Mammary epithelial cell (primary cell): ENCODE measurements at regions of chr19 and their contacts with region 1.

Region 1: DNA sequence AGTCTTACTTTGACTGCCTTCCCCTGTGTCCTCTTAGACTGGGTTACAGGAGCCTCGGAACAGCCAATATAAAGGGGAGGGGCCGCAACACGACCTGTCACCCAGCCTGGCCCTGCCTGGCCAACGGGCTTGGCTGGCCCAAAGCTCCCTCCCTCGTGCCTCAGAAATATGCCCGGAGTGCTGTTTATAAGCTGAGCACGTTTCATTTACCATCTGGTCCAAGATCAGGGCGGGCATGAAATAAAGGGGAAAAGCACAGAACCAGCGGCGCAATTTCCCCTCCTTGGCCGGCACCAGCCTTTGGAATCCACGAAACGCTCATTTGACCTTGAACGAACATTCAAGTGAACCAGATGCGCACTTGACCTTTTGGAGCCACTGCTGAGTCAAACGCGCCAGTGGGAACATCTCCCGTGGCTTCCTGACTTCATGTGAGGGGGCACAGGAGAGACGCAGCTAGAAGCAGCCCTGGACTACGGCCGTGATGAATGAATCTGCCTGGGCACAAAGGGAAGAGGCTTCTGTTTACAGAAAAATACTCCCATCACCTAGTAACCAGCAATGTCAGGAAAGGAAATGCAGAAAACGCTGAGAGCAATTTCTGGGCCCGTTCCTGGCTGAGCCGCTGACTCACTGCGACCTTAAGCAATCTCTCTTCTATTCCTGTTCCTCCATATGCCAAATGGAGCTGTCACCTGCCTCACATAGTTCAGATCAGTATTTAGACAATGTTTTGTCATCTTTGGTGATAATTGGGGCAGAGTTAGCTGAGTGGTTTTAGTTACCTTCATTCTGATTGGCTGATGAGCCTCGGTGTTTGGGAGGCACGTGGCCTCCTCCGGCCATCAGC is 53.3 kb downstream of the RFX2 start:
- DNase-seq: peak; percentile 98
- H3K4me3 ChIP-seq: peak overlapping the region; percentile 6 to 36 (median 23)
- H3K27ac ChIP-seq: peak overlapping the region; percentile 99
- H3K4me1 ChIP-seq: peaks cover 57% of the 10 kb centered on the region
- H3K27me3 ChIP-seq: no peaks in the 10 kb centered on the region
- CTCF ChIP-seq: peak in 1 of 2 donors; percentile 1

Region 2: GRCh38 chr19:6076675-6077463 is 19.8 kb after region 1 on chr19:
- CTCF ChIA-PET with region 1: interaction called, 3 read pairs
- dilution Hi-C with region 1: no loop called
- in situ Hi-C with region 1: no loop called
- intact Hi-C with region 1: loop called (anchors 1 kb)
- DNase-seq: peak; percentile 76
- H3K4me3 ChIP-seq: no peak overlapping the region
- H3K27ac ChIP-seq: peak overlapping the region; percentile 94
- H3K4me1 ChIP-seq: peaks cover 14% of the 10 kb centered on the region
- H3K27me3 ChIP-seq: no peaks in the 10 kb centered on the region
- CTCF ChIP-seq: no peak

Region 3: DNA sequence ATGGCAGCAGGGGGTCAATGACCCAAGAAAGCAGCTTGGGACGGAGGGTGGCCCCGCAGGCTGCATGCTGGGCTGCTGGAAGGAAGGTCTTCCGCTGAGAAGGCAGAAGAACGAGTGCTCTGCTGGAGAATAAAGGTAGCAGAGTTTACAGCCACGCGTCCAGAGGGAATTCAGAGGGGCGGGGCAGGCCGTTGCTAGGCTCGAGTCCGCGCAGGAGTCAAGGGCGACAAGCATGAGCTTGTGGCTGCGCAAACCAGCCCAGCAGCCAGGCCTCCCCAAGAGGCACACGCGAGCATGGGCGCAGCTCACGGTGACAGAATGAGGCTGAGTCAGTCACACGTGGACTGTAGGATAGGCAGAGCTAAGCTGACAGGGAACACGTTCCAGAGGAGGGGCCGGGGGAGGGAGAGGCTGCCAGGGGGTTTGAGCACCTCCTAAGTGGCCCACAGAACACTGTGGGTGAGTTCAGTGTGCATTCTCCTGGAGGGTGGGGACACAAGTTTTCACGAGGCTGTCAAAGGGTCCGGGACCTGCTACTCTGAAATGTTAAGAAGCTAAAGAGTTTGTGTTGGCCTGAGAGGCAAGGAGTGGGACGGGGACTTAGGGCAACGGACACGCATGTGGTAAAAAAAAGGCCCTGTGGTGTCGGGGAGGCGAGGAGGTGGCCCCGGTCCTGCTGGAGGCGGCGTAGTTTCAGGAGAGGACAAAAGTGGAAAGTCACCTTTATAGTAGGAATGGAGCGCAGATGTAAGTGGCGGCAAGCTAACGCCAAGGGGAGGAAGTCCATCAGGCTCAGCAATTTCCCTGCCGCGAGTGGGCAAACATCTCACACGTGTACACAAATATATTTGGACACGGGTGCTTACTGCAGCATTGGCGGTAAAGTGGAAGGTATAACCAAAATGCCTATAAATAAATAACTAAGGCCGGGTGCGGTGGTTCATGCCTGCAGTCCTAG is 35.6 kb after region 1 on chr19:
- CTCF ChIA-PET with region 1: no interaction called
- dilution Hi-C with region 1: no loop called
- in situ Hi-C with region 1: no loop called
- intact Hi-C with region 1: loop called (anchors 1 kb)
- DNase-seq: peak; percentile 97
- H3K4me3 ChIP-seq: peak overlapping the region; percentile 30 to 50 (median 45)
- H3K27ac ChIP-seq: peak overlapping the region; percentile 99
- H3K4me1 ChIP-seq: peaks cover 42% of the 10 kb centered on the region
- H3K27me3 ChIP-seq: no peaks in the 10 kb centered on the region
- CTCF ChIP-seq: peak in 1 of 2 donors; percentile 32

Region 4: GRCh38 chr19:6103217-6103644 is 46.2 kb after region 1 on chr19:
- CTCF ChIA-PET with region 1: no interaction called
- dilution Hi-C with region 1: no loop called
- in situ Hi-C with region 1: loop called in 1 of 2 experiments (anchors 5 kb)
- intact Hi-C with region 1: loop called (anchors 1 kb)
- DNase-seq: peak; percentile 99
- H3K4me3 ChIP-seq: peak overlapping the region in 1 of 3 experiments; percentile 12
- H3K27ac ChIP-seq: peak overlapping the region; percentile 99
- H3K4me1 ChIP-seq: peaks cover 40% of the 10 kb centered on the region
- H3K27me3 ChIP-seq: no peaks in the 10 kb centered on the region
- CTCF ChIP-seq: no peak

Region 5: DNA sequence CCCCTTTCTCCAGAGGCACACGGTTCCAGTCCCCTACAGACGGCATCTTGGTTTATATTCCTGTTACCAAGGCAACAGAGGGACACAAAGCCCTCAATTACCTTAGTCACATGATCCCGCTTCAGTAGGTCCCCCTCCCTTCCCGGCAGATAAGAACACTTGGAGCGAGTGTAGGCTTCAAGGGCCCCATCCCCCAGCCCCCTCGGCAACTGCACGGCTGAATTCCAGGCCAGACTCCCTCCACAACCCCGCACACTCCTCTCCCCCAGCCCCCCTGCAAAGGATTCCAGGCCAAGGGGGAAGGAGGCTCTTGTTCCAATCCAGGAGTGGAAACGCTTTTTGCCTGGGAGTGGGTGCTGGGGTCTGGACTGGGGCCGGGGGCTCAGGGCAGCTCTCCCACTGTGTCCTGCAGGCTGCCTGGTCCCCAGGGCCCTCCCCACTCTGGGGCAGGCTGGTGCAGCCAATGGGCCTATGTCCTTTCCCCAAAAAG is 160.0 kb after region 1 on chr19:
- CTCF ChIA-PET with region 1: no interaction called
- dilution Hi-C with region 1: no loop called
- in situ Hi-C with region 1: no loop called
- intact Hi-C with region 1: no loop called
- DNase-seq: no peak
- H3K4me3 ChIP-seq: no peak overlapping the region
- H3K27ac ChIP-seq: no peak overlapping the region
- H3K4me1 ChIP-seq: peaks cover 8% of the 10 kb centered on the region
- H3K27me3 ChIP-seq: no peaks in the 10 kb centered on the region
- CTCF ChIP-seq: no peak

Region 6: DNA sequence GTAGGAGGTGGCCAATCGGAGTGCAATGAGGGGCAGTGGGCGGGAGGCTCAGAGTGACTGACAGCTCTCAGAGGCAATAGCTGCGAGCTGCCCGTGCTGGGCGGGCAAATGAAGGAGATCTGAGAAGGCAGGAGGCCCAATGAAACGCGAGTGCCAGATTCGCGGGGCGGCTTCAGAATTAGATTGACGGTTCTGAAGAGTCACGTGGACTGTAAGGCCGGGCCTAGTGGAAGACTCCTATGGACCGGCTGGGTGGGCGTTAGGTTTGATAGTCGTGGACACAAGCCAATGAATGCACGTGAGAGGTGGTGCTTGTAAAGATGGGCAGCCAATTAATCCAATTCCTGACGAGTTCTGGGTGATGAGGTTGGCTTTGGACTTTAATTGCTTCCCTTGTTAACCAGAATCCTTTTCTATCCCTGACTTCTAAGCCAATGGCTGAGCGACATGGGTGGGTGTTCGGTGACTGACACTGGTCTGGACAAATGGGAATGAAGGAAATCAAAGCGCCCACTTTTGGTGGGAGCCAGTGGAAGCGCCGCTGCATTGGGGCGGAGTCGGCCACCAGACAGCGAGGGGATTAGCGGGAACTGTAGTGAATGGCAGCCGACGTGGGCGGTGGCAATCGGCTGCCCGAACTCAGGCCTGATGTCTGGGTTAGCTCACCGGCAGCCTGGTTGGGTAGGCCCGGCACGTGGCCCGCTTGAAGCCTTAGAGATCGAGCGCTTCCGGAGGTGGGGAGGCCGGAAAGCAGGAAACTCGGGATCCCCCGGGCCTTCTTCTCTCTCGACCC is 368.1 kb after region 1 on chr19:
- CTCF ChIA-PET with region 1: no interaction called
- dilution Hi-C with region 1: no loop called
- in situ Hi-C with region 1: no loop called
- intact Hi-C with region 1: no loop called
- DNase-seq: peak; percentile 100
- H3K4me3 ChIP-seq: peak overlapping the region; percentile 6 to 21 (median 7)
- H3K27ac ChIP-seq: peak overlapping the region; percentile 26
- H3K4me1 ChIP-seq: peaks cover 19% of the 10 kb centered on the region
- H3K27me3 ChIP-seq: no peaks in the 10 kb centered on the region
- CTCF ChIP-seq: no peak